CD4-positive, alpha-beta memory T cell (primary cell): ENCODE measurements at regions of chr5 and their contacts with region 1.

Region 1: GRCh38 chr5:113612060-113612496 is 98.6 kb downstream of the YTHDC2 start:
- DNase-seq: peak in 4 of 5 donors; percentile 38 to 51 (median 48)
- H3K4me3 ChIP-seq: no peak overlapping the region
- H3K4me3 Mint-ChIP-seq: peak overlapping the region in 1 of 8 donors; percentile 33
- H3K27ac ChIP-seq: no peak overlapping the region
- H3K27ac Mint-ChIP-seq: no peak overlapping the region
- H3K4me1 ChIP-seq: peaks cover 4% of the 10 kb centered on the region
- H3K4me1 Mint-ChIP-seq: peaks cover 0 to 5% (median 3%) of the 10 kb centered on the region in 4 donors
- H3K27me3 ChIP-seq: no peaks in the 10 kb centered on the region
- H3K27me3 Mint-ChIP-seq: peaks cover 8 to 19% of the 10 kb centered on the region in 2 donors

Region 2: DNA sequence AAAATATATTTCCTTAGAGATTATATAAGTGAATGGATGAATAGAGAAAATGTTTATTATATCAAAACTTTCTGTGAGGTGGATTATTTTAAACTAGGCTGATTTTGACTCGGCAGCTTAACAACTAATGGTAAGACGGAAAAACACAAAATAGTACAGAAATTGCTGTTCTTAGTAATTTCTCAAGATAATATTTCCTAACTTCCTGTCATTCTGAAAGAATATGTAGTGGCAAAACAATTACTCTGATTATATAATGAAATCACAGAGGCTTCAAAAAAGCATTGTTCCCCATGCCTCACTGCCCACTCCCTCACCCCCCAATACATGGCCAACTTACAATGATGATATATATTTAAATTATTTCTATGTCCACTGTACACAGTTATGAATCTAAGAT is 13.2 kb before region 1 on chr5:
- CTCF ChIA-PET with region 1: interaction called, 16 read pairs
- POLR2A ChIA-PET with region 1: no interaction called
- intact Hi-C with region 1: no loop called
- DNase-seq: no peak
- H3K4me3 ChIP-seq: no peak overlapping the region
- H3K4me3 Mint-ChIP-seq: no peak overlapping the region
- H3K27ac ChIP-seq: no peak overlapping the region
- H3K27ac Mint-ChIP-seq: peak overlapping the region in 2 of 7 donors; percentile 38 to 51
- H3K4me1 ChIP-seq: no peaks in the 10 kb centered on the region
- H3K4me1 Mint-ChIP-seq: peaks cover 0 to 1% (median 0%) of the 10 kb centered on the region in 4 donors
- H3K27me3 ChIP-seq: no peaks in the 10 kb centered on the region
- H3K27me3 Mint-ChIP-seq: no peaks in the 10 kb centered on the region

Region 3: DNA sequence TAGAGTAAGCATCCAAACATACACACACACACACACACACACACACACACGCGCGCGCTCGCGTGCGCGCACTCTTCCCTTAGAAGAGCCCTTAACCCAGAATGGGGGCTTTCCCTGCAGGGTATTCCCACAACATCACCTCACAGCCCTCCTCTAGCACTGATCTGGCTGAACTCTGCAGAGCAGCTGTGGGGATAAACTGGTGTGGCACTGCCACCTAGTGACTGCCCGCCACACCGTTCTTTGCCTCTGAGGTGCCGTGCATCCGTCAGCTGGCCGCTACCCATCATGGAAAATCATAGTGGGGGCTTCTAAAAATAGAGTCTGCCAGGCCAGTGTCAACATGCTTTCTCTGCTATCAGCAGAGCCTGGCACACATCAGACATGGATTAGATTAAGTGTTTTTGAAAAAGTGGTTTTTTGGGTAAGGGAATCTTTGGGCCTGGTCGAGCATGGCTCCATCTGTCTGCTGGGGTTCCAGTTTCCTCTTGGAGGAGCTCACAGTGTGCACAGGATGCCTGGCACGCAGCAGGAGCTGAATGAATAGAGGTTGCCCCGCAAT is 837.9 kb after region 1 on chr5:
- CTCF ChIA-PET with region 1: interaction called, 10 read pairs
- POLR2A ChIA-PET with region 1: no interaction called
- intact Hi-C with region 1: no loop called
- DNase-seq: peak in 4 of 5 donors; percentile 8 to 16 (median 10)
- H3K4me3 ChIP-seq: no peak overlapping the region
- H3K4me3 Mint-ChIP-seq: no peak overlapping the region
- H3K27ac ChIP-seq: no peak overlapping the region
- H3K27ac Mint-ChIP-seq: no peak overlapping the region
- H3K4me1 ChIP-seq: no peaks in the 10 kb centered on the region
- H3K4me1 Mint-ChIP-seq: peaks cover 0 to 2% (median under 1%) of the 10 kb centered on the region in 4 donors
- H3K27me3 ChIP-seq: no peaks in the 10 kb centered on the region
- H3K27me3 Mint-ChIP-seq: peaks cover 0 to 4% of the 10 kb centered on the region in 2 donors

Region 4: DNA sequence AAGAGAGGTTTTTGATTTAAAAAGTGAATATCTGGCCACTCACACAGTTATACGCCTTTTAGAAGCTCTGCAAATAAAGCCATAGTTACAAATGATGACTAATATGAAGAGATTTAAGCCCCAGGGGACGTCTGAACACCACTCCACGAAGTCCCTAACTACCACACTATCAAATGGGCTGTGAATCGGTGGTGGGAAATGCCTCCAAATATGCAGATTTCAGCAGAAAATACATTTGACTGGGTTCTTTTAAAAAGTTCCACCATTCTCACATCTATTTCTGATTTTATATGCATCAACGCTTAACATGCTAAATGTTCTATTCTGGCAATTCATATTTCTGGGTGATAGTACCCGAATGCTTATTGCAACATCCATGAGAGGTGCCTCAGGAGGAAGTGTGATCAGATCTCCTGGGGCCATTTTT is 1967.7 kb after region 1 on chr5:
- CTCF ChIA-PET with region 1: interaction called, 14 read pairs
- POLR2A ChIA-PET with region 1: no interaction called
- intact Hi-C with region 1: loop called (anchors 1 kb)
- DNase-seq: no peak
- H3K4me3 ChIP-seq: no peak overlapping the region
- H3K4me3 Mint-ChIP-seq: no peak overlapping the region
- H3K27ac ChIP-seq: no peak overlapping the region
- H3K27ac Mint-ChIP-seq: no peak overlapping the region
- H3K4me1 ChIP-seq: no peaks in the 10 kb centered on the region
- H3K4me1 Mint-ChIP-seq: no peaks in the 10 kb centered on the region
- H3K27me3 ChIP-seq: no peaks in the 10 kb centered on the region
- H3K27me3 Mint-ChIP-seq: no peaks in the 10 kb centered on the region